ENCODE measurements at regions of chr16 and their contacts with region 1.

Region 1: GRCh38 chr16:96935-97381 is 18.9 kb downstream of the MPG start:
- DNase-seq: peak; percentile 95
- ATAC-seq: peak; percentile 91
- H3K4me3 Mint-ChIP-seq: no peak overlapping the region
- H3K27ac Mint-ChIP-seq: no peak overlapping the region
- H3K4me1 Mint-ChIP-seq: no peaks in the 10 kb centered on the region; the same call in 1 of the 2 replicates
- H3K27me3 Mint-ChIP-seq: no peaks in the 10 kb centered on the region
- CTCF ChIP-seq: peak; percentile 100

Region 2: GRCh38 chr16:38939-39892 is 57.7 kb before region 1 on chr16:
- CTCF ChIA-PET with region 1: interaction called, 13 read pairs
- POLR2A ChIA-PET with region 1: no interaction called
- DNase-seq: no peak
- ATAC-seq: peak; percentile 20
- H3K4me3 Mint-ChIP-seq: no peak overlapping the region
- H3K27ac Mint-ChIP-seq: no peak overlapping the region
- H3K4me1 Mint-ChIP-seq: no peaks in the 10 kb centered on the region; the same call in 1 of the 2 replicates
- H3K27me3 Mint-ChIP-seq: no peaks in the 10 kb centered on the region
- CTCF ChIP-seq: no peak

Region 3: DNA sequence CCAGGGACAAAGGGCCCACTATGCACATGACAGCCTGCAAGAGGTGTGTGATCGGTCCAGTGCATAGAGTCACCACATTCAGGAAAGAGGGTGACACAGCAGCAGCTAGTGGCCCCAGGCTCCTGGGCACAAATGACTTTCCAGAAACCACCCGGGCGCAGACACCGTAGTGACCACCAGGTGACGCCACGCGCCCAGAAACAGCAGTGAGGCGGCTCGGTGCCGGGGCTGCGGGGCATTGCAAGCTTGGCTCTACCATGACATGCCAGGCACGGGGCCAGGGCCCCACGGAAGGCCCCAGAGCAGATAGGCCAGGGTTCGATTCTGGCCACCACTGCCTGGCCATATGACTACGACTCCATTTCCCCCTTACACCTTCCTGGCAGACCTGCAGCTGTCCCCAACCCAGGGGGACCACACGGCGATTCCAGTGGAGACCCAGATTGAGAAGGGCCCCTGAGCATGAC is 31.3 kb before region 1 on chr16:
- CTCF ChIA-PET with region 1: interaction called, 493 read pairs
- POLR2A ChIA-PET with region 1: interaction called, 12 read pairs
- DNase-seq: peak; percentile 92
- ATAC-seq: peak; percentile 80
- H3K4me3 Mint-ChIP-seq: no peak overlapping the region
- H3K27ac Mint-ChIP-seq: no peak overlapping the region
- H3K4me1 Mint-ChIP-seq: peaks cover 19% of the 10 kb centered on the region
- H3K27me3 Mint-ChIP-seq: no peaks in the 10 kb centered on the region
- CTCF ChIP-seq: peak; percentile 93

Region 4: DNA sequence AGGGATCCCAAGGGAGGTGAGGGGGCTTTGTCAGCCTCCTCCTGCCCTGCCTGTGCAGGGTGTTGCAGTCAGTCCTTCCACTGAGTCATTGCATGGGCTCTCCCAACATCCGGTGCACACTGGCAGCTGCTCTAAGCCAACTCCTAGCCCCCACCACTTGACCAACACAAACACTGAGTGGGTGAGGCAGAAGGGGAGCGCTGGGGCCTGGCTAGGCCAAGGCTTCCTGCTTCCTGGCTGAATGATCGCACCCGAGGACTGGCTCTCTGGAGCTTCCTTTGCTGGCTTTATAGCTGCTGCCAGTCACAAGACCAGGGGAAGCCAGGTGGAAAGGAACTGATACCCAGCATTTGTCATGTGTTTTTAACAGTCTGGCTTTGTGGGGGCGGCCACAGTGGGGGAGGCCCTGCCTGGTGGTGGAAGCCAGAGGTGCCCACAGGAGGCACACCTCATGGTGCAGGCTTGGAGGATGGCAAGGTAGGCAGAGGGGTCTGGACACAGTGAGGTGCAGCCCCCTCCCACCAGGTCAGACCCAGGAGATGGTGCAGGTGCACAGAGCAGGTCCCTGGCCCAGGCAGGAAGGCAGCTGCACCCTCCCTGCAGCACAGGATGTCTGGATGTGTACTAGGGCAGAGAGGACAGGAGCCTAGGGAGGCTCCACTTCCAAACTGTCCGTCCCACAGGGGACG is 12.1 kb before region 1 on chr16:
- CTCF ChIA-PET with region 1: interaction called, 63 read pairs
- POLR2A ChIA-PET with region 1: no interaction called
- DNase-seq: no peak
- ATAC-seq: no peak
- H3K4me3 Mint-ChIP-seq: no peak overlapping the region
- H3K27ac Mint-ChIP-seq: peak overlapping the region; percentile 45; the same call in 1 of the 2 replicates
- H3K4me1 Mint-ChIP-seq: peaks cover 8% of the 10 kb centered on the region; the same call in 1 of the 2 replicates
- H3K27me3 Mint-ChIP-seq: no peaks in the 10 kb centered on the region
- CTCF ChIP-seq: no peak

Region 5: GRCh38 chr16:180938-181667 is 84.1 kb after region 1 on chr16:
- CTCF ChIA-PET with region 1: interaction called, 11 read pairs
- POLR2A ChIA-PET with region 1: no interaction called
- DNase-seq: peak; percentile 93
- ATAC-seq: peak; percentile 65
- H3K4me3 Mint-ChIP-seq: peak overlapping the region; percentile 56
- H3K27ac Mint-ChIP-seq: no peak overlapping the region
- H3K4me1 Mint-ChIP-seq: no peaks in the 10 kb centered on the region
- H3K27me3 Mint-ChIP-seq: peaks cover 41% of the 10 kb centered on the region
- CTCF ChIP-seq: peak; percentile 99

Region 6: DNA sequence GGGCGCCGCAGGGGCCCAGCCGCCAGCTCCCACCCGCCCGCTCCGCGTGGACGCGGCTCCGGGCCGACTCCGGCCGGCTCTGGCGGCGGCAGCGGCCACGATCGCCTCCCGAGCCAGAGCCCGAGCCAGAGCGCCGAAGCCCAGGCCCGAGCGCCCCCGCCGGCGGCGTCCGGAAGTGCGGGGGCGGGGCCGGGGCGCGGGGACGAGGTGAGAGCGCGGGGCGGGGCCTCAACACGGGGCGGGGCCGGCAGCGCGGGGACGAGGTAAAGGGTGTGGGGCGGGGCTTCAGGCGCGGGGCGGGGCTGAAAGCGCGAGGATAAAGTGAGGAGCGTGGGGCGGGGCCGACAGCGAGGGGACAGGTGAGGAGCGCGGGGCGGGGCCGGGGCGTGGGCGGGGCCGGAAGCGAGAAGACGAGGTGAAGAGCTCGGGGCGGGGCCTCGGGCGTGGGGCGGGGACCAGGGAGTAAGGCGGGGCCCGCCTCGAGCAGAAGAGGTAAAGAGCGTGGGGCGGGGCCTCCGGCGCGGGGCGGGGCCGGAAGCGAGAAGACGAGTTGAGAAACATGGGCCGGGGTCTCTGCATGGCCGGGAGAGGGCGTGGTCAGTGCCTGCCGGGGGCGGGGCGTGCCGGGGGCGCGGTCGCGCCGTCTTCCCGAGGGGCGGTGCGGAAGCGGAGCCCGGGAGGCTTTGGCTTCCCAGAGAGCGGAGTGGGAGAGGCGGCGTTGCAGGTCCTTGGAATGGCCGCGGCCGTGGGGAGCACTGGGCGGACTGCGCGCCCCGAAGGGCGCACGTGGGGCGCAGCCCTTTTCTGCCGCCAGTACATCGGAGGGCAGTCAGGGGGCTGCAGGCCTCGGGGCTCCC is 255.8 kb after region 1 on chr16 and contains the start of gene AXIN1:
- CTCF ChIA-PET with region 1: interaction called, 10 read pairs
- POLR2A ChIA-PET with region 1: no interaction called
- DNase-seq: peak; percentile 100
- ATAC-seq: peak; percentile 90
- H3K4me3 Mint-ChIP-seq: peak within 1 kb of the TSS; percentile 76
- H3K27ac Mint-ChIP-seq: no peak within 1 kb of the TSS
- H3K4me1 Mint-ChIP-seq: peaks cover 6% of the 10 kb centered on the region
- H3K27me3 Mint-ChIP-seq: no peaks in the 10 kb centered on the region; the same call in 1 of the 2 replicates
- CTCF ChIP-seq: peak; percentile 52
- total RNA-seq, gene AXIN1: 48.0 to 50.3 TPM (median 48.9 TPM) in 3 replicates